ENCODE measurements at regions of chr5 and their contacts with region 1.

Region 1: GRCh38 chr5:10249948-10250803 is at the start of gene CCT5:
- DNase-seq: peak; percentile 97
- H3K4me3 ChIP-seq: peak within 1 kb of the TSS; percentile 84 to 95 (median 93)
- H3K27ac ChIP-seq: peak within 1 kb of the TSS; percentile 95
- H3K4me1 ChIP-seq: peaks cover 14% of the 10 kb centered on the region
- H3K27me3 ChIP-seq: no peaks in the 10 kb centered on the region
- CTCF ChIP-seq: no peak
- POLR2A ChIP-seq: peak; percentile 77
- total RNA-seq, gene CCT5: 323 and 343 TPM in 2 replicates

Region 2: GRCh38 chr5:10353241-10354047 is 103.3 kb after region 1 on chr5 and contains the start of gene MARCHF6:
- CTCF ChIA-PET with region 1: no interaction called
- POLR2A ChIA-PET with region 1: interaction called, 5 read pairs
- dilution Hi-C with region 1: no loop called
- intact Hi-C with region 1: loop called (anchors 1 kb)
- DNase-seq: peak; percentile 89
- H3K4me3 ChIP-seq: peak within 1 kb of the TSS; percentile 47 to 94 (median 72)
- H3K27ac ChIP-seq: peak within 1 kb of the TSS; percentile 85
- H3K4me1 ChIP-seq: peaks cover 17% of the 10 kb centered on the region
- H3K27me3 ChIP-seq: no peaks in the 10 kb centered on the region
- CTCF ChIP-seq: no peak
- POLR2A ChIP-seq: peak; percentile 97
- total RNA-seq, gene MARCHF6: 105 and 108 TPM in 2 replicates